Endothelial cell of umbilical vein (primary cell): ENCODE measurements at regions of chr13 and their contacts with region 1.

Region 1: DNA sequence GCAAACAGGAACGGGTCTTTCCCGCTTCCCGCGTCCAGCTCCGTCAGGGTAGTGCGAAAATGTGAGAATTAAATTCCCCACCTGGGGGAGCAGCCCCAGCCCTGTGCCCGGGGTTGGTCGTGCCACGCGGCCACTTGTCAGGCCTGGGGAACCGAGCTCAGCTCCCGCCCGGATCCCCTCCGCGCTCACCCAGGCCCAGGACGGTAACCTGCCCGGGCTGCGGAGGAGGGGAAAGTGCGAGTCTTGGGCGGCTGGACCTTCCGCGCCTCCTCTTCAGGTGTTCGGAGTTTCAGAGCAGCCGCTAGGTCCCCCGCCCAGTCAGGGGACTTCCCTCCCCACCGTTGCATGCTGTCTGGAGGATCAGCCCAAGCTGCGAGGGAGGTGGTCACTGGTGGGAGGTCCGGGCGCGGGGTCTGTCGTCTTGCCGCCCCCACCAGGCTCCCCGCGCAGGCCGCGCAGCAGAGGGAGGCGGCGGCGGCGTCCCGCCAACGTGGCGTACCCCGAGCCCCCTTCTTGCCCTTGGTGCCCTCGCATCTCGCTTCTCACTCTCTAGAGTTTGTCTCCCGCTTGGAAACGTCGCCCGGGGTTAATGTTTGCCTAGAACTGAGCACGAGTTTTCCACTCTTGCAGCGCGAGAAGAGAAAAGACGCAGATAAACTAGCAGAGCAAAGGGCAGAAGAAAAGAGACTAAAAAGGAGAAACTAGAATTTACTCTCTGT is 8.1 kb downstream of the URAD start:
- DNase-seq: no peak
- H3K4me3 ChIP-seq: no peak overlapping the region
- H3K27ac ChIP-seq: no peak overlapping the region
- H3K4me1 ChIP-seq: no peaks in the 10 kb centered on the region
- H3K27me3 ChIP-seq: peaks cover 64 to 74% of the 10 kb centered on the region in 2 experiments
- CTCF ChIP-seq: no peak
- POLR2A ChIP-seq: no peak

Region 2: GRCh38 chr13:27481766-27482165 is 498.7 kb before region 1 on chr13:
- CTCF ChIA-PET with region 1: interaction called, 3 read pairs
- POLR2A ChIA-PET with region 1: no interaction called
- dilution Hi-C with region 1: no loop called
- intact Hi-C with region 1: loop called (anchors 1 kb)
- DNase-seq: peak; percentile 28
- H3K4me3 ChIP-seq: no peak overlapping the region
- H3K27ac ChIP-seq: no peak overlapping the region
- H3K4me1 ChIP-seq: no peaks in the 10 kb centered on the region
- H3K27me3 ChIP-seq: peaks cover 12 to 21% of the 10 kb centered on the region in 2 experiments
- CTCF ChIP-seq: peak; percentile 82 to 86
- POLR2A ChIP-seq: no peak

Region 3: DNA sequence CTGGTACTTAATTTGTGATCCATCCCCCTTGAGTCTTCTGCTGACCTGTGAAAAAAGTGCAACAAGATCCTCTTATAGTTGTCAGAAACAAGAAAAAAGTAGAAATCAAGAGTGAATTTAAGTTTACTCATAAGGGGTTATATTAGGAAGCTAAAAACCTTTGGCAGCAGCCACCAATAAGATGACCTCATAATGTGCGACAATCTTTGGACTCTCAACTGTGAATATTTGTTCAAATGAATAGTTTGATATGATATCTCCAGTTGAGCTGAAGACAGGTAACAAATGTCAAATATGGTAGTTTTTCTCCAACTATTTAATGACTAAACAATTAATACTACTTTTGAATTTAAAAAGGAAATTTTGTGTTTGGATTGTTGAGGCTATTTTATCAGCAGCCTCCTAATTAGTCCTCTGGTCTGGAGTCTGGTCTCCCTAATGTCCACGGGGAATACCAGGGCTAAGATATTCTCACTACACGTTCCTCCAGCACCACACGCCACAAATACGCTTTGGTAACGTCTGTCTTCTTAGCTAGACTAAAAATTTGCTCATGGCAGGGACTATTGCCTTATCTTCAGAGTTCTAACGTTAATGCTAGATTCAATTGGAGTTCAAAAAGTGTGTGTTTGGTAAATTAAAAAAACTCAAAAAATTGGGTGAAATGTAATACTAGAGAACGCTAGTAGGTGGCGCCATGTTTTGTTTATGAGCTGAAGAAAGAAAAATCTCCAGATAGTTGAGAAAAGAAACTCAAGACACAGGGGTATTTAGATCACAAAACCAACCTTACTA is 111.6 kb before region 1 on chr13:
- CTCF ChIA-PET with region 1: interaction called, 29 read pairs
- POLR2A ChIA-PET with region 1: no interaction called
- dilution Hi-C with region 1: no loop called
- intact Hi-C with region 1: loop called (anchors 1 kb)
- DNase-seq: peak; percentile 29
- H3K4me3 ChIP-seq: no peak overlapping the region
- H3K27ac ChIP-seq: no peak overlapping the region
- H3K4me1 ChIP-seq: no peaks in the 10 kb centered on the region
- H3K27me3 ChIP-seq: peaks cover 2 to 16% of the 10 kb centered on the region in 2 experiments
- CTCF ChIP-seq: peak; percentile 28 to 37
- POLR2A ChIP-seq: no peak

Region 4: DNA sequence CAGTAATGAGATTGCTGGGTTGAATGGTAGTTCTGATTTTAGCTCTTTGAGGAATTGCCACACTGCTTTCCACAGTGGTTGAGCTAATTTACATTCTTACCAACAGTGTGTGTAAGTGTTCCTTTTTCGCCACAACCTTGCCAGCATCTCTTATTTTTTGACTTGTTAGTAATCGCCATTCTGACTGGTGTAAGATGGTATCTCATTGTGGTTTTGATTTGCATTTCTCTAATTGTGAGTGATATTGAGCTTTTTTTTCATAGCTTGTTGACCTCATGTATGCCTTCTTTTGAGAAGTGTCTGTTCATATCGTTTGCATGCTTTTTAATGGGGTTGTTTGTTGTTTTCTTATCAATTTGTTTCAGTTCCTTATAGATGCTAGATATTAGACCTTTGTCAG is 1084.7 kb after region 1 on chr13:
- CTCF ChIA-PET with region 1: no interaction called
- POLR2A ChIA-PET with region 1: no interaction called
- dilution Hi-C with region 1: no loop called
- intact Hi-C with region 1: no loop called
- DNase-seq: no peak
- H3K4me3 ChIP-seq: no peak overlapping the region
- H3K27ac ChIP-seq: no peak overlapping the region
- H3K4me1 ChIP-seq: no peaks in the 10 kb centered on the region
- H3K27me3 ChIP-seq: no peaks in the 10 kb centered on the region
- CTCF ChIP-seq: no peak
- POLR2A ChIP-seq: no peak